CD8-positive, alpha-beta T cell (primary cell): ENCODE measurements at regions of chr14 and their contacts with region 1.

Region 1: GRCh38 chr14:22766456-22767322 is at the start of gene OXA1L:
- DNase-seq: peak; percentile 88 to 99 (median 97)
- ATAC-seq: peak; percentile 92
- H3K4me3 ChIP-seq: peak within 1 kb of the TSS; percentile 93 to 99
- H3K4me3 Mint-ChIP-seq: peak within 1 kb of the TSS; percentile 94
- H3K27ac ChIP-seq: peak within 1 kb of the TSS; percentile 84 to 93
- H3K27ac Mint-ChIP-seq: peak within 1 kb of the TSS; percentile 96
- H3K4me1 ChIP-seq: peaks cover 22% of the 10 kb centered on the region
- H3K4me1 Mint-ChIP-seq: peaks cover 34% of the 10 kb centered on the region
- H3K27me3 ChIP-seq: no peaks in the 10 kb centered on the region
- H3K27me3 Mint-ChIP-seq: no peaks in the 10 kb centered on the region
- CTCF ChIP-seq: no peak
- total RNA-seq, gene OXA1L: 186 to 192 TPM

Region 2: DNA sequence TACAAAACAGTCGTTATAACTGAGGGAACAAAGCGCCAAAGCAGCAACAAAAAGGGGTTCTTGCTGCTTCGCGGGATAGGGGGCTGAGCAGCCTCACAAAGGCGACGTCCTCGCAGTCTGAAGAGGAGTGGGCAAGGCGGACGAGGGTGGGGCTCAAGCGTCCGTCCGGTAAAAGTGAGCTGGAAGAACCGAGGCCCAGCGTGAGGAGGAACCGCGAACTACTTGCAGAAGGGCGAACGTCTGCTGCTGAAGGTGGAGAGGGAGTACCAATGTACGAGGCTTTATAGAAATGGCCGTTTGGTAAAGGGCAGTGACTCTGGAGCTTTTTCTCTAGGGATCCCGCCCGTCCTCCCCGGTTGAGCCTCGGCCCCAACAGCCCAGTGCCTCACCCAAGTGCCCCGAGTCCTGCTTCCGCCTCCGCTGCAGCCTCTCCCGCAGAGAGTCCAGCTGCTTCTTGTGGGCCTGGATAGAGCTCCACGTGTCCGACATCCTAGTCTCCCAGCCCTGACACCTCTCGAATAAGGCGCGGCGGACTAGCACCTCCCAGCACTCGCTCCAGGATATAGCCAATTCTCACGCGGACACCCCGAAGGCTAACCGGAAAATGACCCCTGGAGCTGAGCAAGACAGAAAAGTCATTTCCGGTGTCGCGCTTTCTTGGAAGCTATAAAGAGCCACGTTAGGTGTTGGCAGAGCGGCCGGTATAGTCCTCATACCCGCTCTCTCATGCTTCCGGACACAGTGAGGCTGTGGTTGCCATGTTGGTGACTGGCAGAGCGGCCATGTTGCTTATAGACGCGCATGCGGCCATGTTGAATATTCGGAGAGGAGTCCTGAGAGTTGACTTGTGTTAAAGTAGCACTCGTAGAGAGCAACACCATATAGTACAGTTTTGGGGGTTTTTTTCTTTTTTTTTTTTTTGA is 1255.7 kb before region 1 on chr14 and contains the start of gene METTL3:
- CTCF ChIA-PET with region 1: no interaction called
- POLR2A ChIA-PET with region 1: no interaction called
- intact Hi-C with region 1: loop called in 1 of 2 experiments (anchors 5 kb)
- DNase-seq: peak; percentile 87 to 98 (median 92)
- ATAC-seq: peak; percentile 99
- H3K4me3 ChIP-seq: peak within 1 kb of the TSS; percentile 85 to 90
- H3K4me3 Mint-ChIP-seq: peak within 1 kb of the TSS; percentile 99
- H3K27ac ChIP-seq: peak within 1 kb of the TSS; percentile 88 to 89
- H3K27ac Mint-ChIP-seq: peak within 1 kb of the TSS; percentile 99
- H3K4me1 ChIP-seq: peaks cover 22% of the 10 kb centered on the region
- H3K4me1 Mint-ChIP-seq: peaks cover 39% of the 10 kb centered on the region
- H3K27me3 ChIP-seq: no peaks in the 10 kb centered on the region
- H3K27me3 Mint-ChIP-seq: no peaks in the 10 kb centered on the region
- CTCF ChIP-seq: no peak
- total RNA-seq, gene METTL3: 23.7 to 26.5 TPM

Region 3: DNA sequence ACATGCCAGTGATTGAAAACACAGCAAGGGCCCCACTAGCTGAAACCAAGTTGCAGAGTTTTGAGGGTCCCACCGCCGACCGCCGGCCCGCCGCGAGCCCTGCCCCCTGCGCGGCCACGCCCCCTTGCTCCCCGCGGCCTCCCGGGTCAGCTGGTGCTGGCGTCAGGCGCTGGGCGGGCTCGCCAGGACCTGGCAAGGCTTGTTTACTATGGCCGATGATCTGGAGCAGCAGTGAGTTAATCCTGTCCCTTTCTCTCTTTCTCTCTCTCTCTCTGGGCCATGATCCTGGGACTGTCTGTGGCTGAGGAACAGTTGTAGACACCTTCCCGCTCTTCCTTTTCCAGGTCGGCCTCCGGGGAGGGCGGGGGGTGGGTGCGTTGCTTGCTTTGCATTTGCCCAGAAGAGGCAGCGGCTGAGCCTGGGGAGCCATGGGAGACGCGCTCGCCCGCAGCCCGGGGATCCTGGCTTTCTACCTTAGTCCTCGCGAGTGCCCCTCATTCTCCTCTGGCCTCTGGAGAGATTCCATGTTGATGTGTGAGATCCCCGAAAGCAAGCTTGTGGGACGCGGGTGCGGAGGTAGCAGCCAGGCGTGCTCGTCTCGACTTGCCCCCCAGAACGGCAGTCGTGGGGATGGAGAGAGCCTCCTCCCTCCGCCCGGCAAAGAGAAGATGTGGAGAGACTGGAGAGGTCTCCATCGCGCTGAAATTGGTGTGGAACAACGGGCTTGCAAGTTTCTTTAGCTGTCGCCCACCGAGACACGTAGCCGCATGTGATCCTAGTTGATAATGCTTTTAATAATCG is 168.4 kb before region 1 on chr14 and contains the start of gene ABHD4:
- CTCF ChIA-PET with region 1: no interaction called
- POLR2A ChIA-PET with region 1: interaction called, 10 read pairs
- intact Hi-C with region 1: no loop called
- DNase-seq: peak; percentile 16 to 79 (median 61)
- ATAC-seq: peak; percentile 77
- H3K4me3 ChIP-seq: peak within 1 kb of the TSS; percentile 70 to 86
- H3K4me3 Mint-ChIP-seq: peak within 1 kb of the TSS; percentile 90
- H3K27ac ChIP-seq: peak within 1 kb of the TSS; percentile 55 to 67
- H3K27ac Mint-ChIP-seq: peak within 1 kb of the TSS; percentile 88
- H3K4me1 ChIP-seq: peaks cover 22% of the 10 kb centered on the region
- H3K4me1 Mint-ChIP-seq: peaks cover 41% of the 10 kb centered on the region
- H3K27me3 ChIP-seq: no peaks in the 10 kb centered on the region
- H3K27me3 Mint-ChIP-seq: no peaks in the 10 kb centered on the region
- CTCF ChIP-seq: no peak
- total RNA-seq, gene ABHD4: 7.9 to 8.3 TPM

Region 4: DNA sequence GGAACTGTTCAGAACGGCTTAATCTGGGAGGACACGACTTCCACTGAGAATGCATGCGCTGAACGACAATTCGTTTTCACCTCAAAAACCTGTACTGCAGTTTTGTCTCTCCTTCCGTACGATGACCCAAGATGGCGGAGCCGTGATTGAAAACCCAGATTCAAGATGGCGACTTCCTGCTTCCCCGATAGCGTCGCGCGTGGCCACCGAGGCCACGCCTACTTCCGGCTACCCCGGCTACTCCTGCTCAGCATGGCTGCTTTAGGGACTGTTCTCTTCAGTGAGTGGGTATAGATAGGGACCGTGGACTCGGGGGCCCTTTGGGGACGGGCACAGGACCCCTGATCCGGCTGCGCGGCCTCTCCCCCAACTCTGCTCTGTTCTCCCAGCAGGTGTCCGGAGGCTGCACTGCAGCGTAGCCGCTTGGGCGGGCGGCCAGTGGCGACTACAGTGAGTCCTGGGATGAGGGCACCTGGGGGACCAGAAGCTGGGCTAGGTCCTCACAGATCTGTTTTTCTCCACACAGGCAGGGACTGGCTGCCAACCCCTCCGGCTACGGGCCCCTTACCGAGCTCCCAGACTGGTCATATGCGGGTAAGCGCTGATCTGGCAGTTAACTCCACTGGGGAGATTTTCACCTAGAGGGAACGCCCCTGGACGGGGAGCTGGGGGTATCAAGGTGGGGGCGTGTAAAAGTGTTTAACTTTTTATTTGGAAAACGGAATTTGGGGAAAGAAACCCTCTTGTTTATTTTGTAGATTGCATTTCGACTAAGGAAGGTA is 63.2 kb after region 1 on chr14 and contains the start of gene MRPL52:
- CTCF ChIA-PET with region 1: interaction called, 5 read pairs
- POLR2A ChIA-PET with region 1: interaction called, 7 read pairs
- intact Hi-C with region 1: loop called (anchors 1 to 2 kb)
- DNase-seq: peak; percentile 81 to 97 (median 90)
- ATAC-seq: peak; percentile 95
- H3K4me3 ChIP-seq: peak within 1 kb of the TSS; percentile 89 to 91
- H3K4me3 Mint-ChIP-seq: peak within 1 kb of the TSS; percentile 92
- H3K27ac ChIP-seq: peak within 1 kb of the TSS; percentile 69 to 90
- H3K27ac Mint-ChIP-seq: peak within 1 kb of the TSS; percentile 96
- H3K4me1 ChIP-seq: peaks cover 13% of the 10 kb centered on the region
- H3K4me1 Mint-ChIP-seq: peaks cover 31% of the 10 kb centered on the region
- H3K27me3 ChIP-seq: peaks cover 0 to 5% of the 10 kb centered on the region in 2 experiments
- H3K27me3 Mint-ChIP-seq: peaks cover 7% of the 10 kb centered on the region
- CTCF ChIP-seq: no peak
- total RNA-seq, gene MRPL52: 22.3 to 25.7 TPM

Region 5: GRCh38 chr14:22908601-22909000 is 141.9 kb after region 1 on chr14:
- CTCF ChIA-PET with region 1: no interaction called
- POLR2A ChIA-PET with region 1: no interaction called
- intact Hi-C with region 1: no loop called
- DNase-seq: no peak
- ATAC-seq: no peak
- H3K4me3 ChIP-seq: no peak overlapping the region
- H3K4me3 Mint-ChIP-seq: no peak overlapping the region
- H3K27ac ChIP-seq: no peak overlapping the region
- H3K27ac Mint-ChIP-seq: no peak overlapping the region
- H3K4me1 ChIP-seq: peaks cover 6% of the 10 kb centered on the region
- H3K4me1 Mint-ChIP-seq: peaks cover 20% of the 10 kb centered on the region
- H3K27me3 ChIP-seq: no peaks in the 10 kb centered on the region
- H3K27me3 Mint-ChIP-seq: no peaks in the 10 kb centered on the region
- CTCF ChIP-seq: no peak

Region 6: DNA sequence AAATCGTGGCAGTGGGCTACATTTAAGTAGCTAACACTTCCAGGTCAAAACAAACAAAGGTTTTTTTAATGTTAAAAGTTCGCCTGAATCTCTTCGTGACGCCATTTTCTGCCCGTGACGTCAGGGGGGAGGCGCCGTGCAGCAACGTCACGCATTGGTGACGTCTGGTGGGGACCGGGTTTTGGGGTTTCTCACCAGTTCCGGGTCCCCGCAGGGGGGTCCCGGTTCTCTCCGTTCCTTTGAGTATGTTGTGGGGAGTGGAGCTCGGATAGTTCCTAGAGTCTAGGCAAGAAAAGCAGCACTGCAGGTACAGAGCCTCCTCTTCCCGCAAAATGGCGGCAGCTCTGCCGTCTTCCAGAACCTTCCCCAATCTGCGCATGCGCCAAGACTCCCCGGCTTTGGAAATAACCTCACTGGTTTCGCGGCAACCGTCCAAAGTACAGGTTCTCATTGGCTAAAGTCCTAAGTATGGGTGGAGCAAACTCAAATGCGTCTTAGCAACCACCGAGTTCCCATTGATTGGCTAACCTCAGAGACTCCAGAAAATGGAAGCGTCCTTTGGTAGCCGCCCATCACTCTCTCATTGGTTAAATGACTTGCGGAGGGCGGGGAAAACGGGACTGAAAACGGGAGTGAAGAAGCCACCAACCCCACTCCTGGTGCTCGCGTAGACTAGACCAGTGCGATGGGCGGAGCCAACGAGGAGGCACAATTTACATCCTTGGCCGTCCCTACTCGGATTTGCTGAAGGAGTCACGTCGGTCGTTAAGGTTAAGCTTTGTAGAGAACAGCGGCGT is 152.3 kb after region 1 on chr14 and contains the start of gene RBM23:
- CTCF ChIA-PET with region 1: no interaction called
- POLR2A ChIA-PET with region 1: interaction called, 4 read pairs
- intact Hi-C with region 1: loop called (anchors 1 to 5 kb)
- DNase-seq: peak; percentile 98 to 100 (median 100)
- ATAC-seq: peak; percentile 91
- H3K4me3 ChIP-seq: peak within 1 kb of the TSS; percentile 59 to 88
- H3K4me3 Mint-ChIP-seq: peak within 1 kb of the TSS; percentile 91
- H3K27ac ChIP-seq: peak within 1 kb of the TSS; percentile 100
- H3K27ac Mint-ChIP-seq: peak within 1 kb of the TSS; percentile 99
- H3K4me1 ChIP-seq: peaks cover 30% of the 10 kb centered on the region
- H3K4me1 Mint-ChIP-seq: peaks cover 42% of the 10 kb centered on the region
- H3K27me3 ChIP-seq: no peaks in the 10 kb centered on the region
- H3K27me3 Mint-ChIP-seq: no peaks in the 10 kb centered on the region
- CTCF ChIP-seq: no peak
- total RNA-seq, gene RBM23: 135 to 141 TPM

Region 7: GRCh38 chr14:23095196-23096108 is 328.8 kb after region 1 on chr14 and contains the start of gene C14orf119:
- CTCF ChIA-PET with region 1: no interaction called
- POLR2A ChIA-PET with region 1: interaction called, 8 read pairs
- intact Hi-C with region 1: loop called in 1 of 2 experiments (anchors 5 kb)
- DNase-seq: peak in 8 of 9 experiments; percentile 98 to 100 (median 100)
- ATAC-seq: peak; percentile 86
- H3K4me3 ChIP-seq: peak within 1 kb of the TSS; percentile 81 to 93
- H3K4me3 Mint-ChIP-seq: no peak within 1 kb of the TSS
- H3K27ac ChIP-seq: peak within 1 kb of the TSS; percentile 93 to 98
- H3K27ac Mint-ChIP-seq: no peak within 1 kb of the TSS
- H3K4me1 ChIP-seq: peaks cover 39% of the 10 kb centered on the region
- H3K4me1 Mint-ChIP-seq: peaks cover 51% of the 10 kb centered on the region
- H3K27me3 ChIP-seq: no peaks in the 10 kb centered on the region
- H3K27me3 Mint-ChIP-seq: no peaks in the 10 kb centered on the region
- CTCF ChIP-seq: no peak
- total RNA-seq, gene C14orf119: 3.5 to 3.8 TPM